Uterus (tissue), 4 donors: ENCODE measurements at regions of chr10 and their contacts with region 1.

Region 1: DNA sequence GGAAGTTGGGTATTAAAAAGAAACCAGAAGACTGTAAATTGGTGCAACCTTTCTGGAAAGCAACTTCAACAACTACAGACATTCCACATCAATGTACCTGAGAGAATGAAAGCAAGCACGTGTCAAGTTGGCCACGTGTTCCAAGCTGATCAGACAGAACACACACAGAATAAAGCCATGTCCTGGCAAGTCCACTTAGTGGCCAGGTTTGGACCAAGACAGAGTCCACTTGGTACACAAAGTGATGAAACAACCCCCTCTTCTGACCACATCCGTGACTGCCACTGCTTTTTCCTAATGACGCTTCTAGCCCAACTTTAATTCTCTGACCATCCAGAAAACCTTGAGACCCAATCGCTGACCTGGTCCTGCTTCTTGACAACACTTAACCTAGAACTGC is 109.4 kb downstream of the ABLIM1 start:
- DNase-seq: peak; percentile 48 to 56
- H3K4me3 ChIP-seq: no peak overlapping the region
- H3K27ac ChIP-seq: no peak overlapping the region
- H3K4me1 ChIP-seq: no peaks in the 10 kb centered on the region
- H3K27me3 ChIP-seq: no peaks in the 10 kb centered on the region
- CTCF ChIP-seq: peak; percentile 41 to 73 (median 47)
- POLR2A ChIP-seq: no peak

Region 2: GRCh38 chr10:114795039-114795438 is 246.4 kb after region 1 on chr10:
- intact Hi-C with region 1: loop called (anchors 10 kb)
- DNase-seq: no peak
- H3K4me3 ChIP-seq: no peak overlapping the region
- H3K27ac ChIP-seq: no peak overlapping the region
- H3K4me1 ChIP-seq: no peaks in the 10 kb centered on the region
- H3K27me3 ChIP-seq: no peaks in the 10 kb centered on the region
- CTCF ChIP-seq: no peak
- POLR2A ChIP-seq: no peak